CD8-positive, alpha-beta T cell (primary cell): ENCODE measurements at regions of chr2 and their contacts with region 1.

Region 1: GRCh38 chr2:55050133-55050994 is at the start of gene RTN4:
- DNase-seq: peak; percentile 95 to 99 (median 98)
- ATAC-seq: peak; percentile 88
- H3K4me3 ChIP-seq: peak within 1 kb of the TSS; percentile 79 to 87
- H3K4me3 Mint-ChIP-seq: peak within 1 kb of the TSS; percentile 100
- H3K27ac ChIP-seq: peak within 1 kb of the TSS; percentile 83 to 90
- H3K27ac Mint-ChIP-seq: peak within 1 kb of the TSS; percentile 100
- H3K4me1 ChIP-seq: peaks cover 60% of the 10 kb centered on the region
- H3K4me1 Mint-ChIP-seq: peaks cover 72% of the 10 kb centered on the region
- H3K27me3 ChIP-seq: no peaks in the 10 kb centered on the region
- H3K27me3 Mint-ChIP-seq: no peaks in the 10 kb centered on the region
- CTCF ChIP-seq: no peak
- total RNA-seq, gene RTN4: 79.7 to 81.7 TPM

Region 2: GRCh38 chr2:54558188-54559005 is 492.0 kb before region 1 on chr2:
- CTCF ChIA-PET with region 1: no interaction called
- POLR2A ChIA-PET with region 1: no interaction called
- intact Hi-C with region 1: loop called in 1 of 2 experiments (anchors 10 kb)
- DNase-seq: peak; percentile 43 to 85 (median 69)
- ATAC-seq: peak; percentile 67
- H3K4me3 ChIP-seq: peak overlapping the region; percentile 92 to 94
- H3K4me3 Mint-ChIP-seq: peak overlapping the region; percentile 98
- H3K27ac ChIP-seq: peak overlapping the region; percentile 81 to 82
- H3K27ac Mint-ChIP-seq: peak overlapping the region; percentile 93
- H3K4me1 ChIP-seq: peaks cover 35% of the 10 kb centered on the region
- H3K4me1 Mint-ChIP-seq: peaks cover 64% of the 10 kb centered on the region
- H3K27me3 ChIP-seq: no peaks in the 10 kb centered on the region
- H3K27me3 Mint-ChIP-seq: no peaks in the 10 kb centered on the region
- CTCF ChIP-seq: no peak

Region 3: DNA sequence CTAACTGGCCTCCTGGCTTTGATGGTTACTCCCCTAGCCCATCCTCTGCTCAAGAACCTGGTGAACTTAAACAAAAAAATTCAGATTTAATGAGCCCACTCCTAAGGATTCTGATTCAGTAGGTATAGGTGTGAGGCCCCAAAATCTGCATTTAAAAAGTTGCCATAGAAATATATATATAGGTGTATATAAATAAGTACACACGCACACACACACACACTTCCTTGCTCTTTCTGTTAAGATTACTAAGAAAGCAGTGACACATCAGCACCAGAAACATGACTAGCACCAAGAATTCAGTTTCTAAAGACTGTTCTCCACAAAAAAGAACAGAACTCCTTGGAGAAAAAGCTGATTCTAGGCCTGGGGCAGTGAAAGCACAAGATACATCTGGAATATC is 309.1 kb before region 1 on chr2:
- CTCF ChIA-PET with region 1: no interaction called
- POLR2A ChIA-PET with region 1: no interaction called
- intact Hi-C with region 1: no loop called
- DNase-seq: no peak
- ATAC-seq: no peak
- H3K4me3 ChIP-seq: no peak overlapping the region
- H3K4me3 Mint-ChIP-seq: no peak overlapping the region
- H3K27ac ChIP-seq: no peak overlapping the region
- H3K27ac Mint-ChIP-seq: no peak overlapping the region
- H3K4me1 ChIP-seq: no peaks in the 10 kb centered on the region
- H3K4me1 Mint-ChIP-seq: no peaks in the 10 kb centered on the region
- H3K27me3 ChIP-seq: no peaks in the 10 kb centered on the region
- H3K27me3 Mint-ChIP-seq: peaks cover 4% of the 10 kb centered on the region
- CTCF ChIP-seq: no peak

Region 4: DNA sequence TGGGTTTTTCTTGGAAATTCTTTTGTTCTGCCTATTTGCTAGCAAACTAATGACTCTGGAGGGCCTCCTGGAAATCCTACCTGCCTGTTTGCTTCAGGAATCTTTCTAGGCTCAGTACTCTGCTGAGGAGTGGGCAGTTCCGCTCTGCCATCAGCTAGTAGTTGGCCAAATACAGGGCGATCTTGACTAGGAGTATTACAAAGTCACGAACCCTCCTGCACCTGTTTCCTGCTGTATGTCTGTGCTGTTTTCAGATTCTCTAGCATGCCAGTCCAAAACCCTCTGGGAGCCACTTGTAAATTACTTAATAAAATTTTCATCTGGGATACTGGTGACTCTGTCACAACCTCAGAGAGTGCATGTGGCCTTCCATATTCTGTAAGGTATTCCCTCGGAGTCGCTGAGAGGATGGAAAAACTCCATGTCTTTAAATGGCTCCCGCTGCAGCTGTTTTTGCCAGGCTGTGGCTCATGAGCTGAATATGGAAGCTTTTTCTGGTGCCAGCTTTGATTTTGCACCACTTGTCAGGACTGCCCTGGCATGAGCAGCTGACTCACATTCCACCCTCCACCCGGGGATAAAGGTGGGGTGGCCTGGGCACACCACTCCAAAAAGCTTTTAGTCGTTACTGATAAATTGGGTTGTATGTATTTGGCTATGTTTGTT is 123.1 kb before region 1 on chr2:
- CTCF ChIA-PET with region 1: no interaction called
- POLR2A ChIA-PET with region 1: no interaction called
- intact Hi-C with region 1: no loop called
- DNase-seq: no peak
- ATAC-seq: no peak
- H3K4me3 ChIP-seq: no peak overlapping the region
- H3K4me3 Mint-ChIP-seq: no peak overlapping the region
- H3K27ac ChIP-seq: no peak overlapping the region
- H3K27ac Mint-ChIP-seq: no peak overlapping the region
- H3K4me1 ChIP-seq: no peaks in the 10 kb centered on the region
- H3K4me1 Mint-ChIP-seq: no peaks in the 10 kb centered on the region
- H3K27me3 ChIP-seq: no peaks in the 10 kb centered on the region
- H3K27me3 Mint-ChIP-seq: peaks cover 8% of the 10 kb centered on the region
- CTCF ChIP-seq: no peak

Region 5: GRCh38 chr2:55010149-55010591 is 40.2 kb before region 1 on chr2:
- CTCF ChIA-PET with region 1: interaction called, 18 read pairs
- POLR2A ChIA-PET with region 1: interaction called, 15 read pairs
- intact Hi-C with region 1: loop called (anchors 1 to 5 kb)
- DNase-seq: peak; percentile 7 to 79 (median 54)
- ATAC-seq: peak; percentile 95
- H3K4me3 ChIP-seq: peak overlapping the region; percentile 24 to 43
- H3K4me3 Mint-ChIP-seq: peak overlapping the region; percentile 93
- H3K27ac ChIP-seq: peak overlapping the region; percentile 40 to 45
- H3K27ac Mint-ChIP-seq: peak overlapping the region; percentile 95
- H3K4me1 ChIP-seq: peaks cover 61% of the 10 kb centered on the region
- H3K4me1 Mint-ChIP-seq: peaks cover 77% of the 10 kb centered on the region
- H3K27me3 ChIP-seq: no peaks in the 10 kb centered on the region
- H3K27me3 Mint-ChIP-seq: no peaks in the 10 kb centered on the region
- CTCF ChIP-seq: no peak

Region 6: DNA sequence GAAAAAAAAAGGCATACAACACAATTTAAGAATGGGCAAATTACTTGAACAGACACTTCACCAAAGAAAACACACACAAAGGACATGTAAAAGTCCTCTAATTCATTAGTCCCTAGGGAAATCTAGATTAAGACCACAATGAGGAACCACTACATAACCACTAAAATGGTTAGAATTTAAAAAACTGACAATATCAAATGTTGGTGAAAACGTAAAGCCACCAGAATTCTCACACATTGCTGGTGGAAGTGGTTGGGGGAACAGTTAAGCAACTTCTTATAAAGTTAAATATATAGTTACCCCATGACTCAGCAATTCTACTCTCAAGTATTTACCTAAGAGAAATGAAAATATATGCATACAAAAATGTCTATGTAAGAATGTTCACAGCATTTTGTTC is 11.9 kb before region 1 on chr2:
- CTCF ChIA-PET with region 1: interaction called, 11 read pairs
- POLR2A ChIA-PET with region 1: interaction called, 5 read pairs
- intact Hi-C with region 1: loop called in 1 of 2 experiments (anchors 1 kb)
- DNase-seq: peak in 1 of 9 experiments; percentile 13
- ATAC-seq: no peak
- H3K4me3 ChIP-seq: no peak overlapping the region
- H3K4me3 Mint-ChIP-seq: no peak overlapping the region
- H3K27ac ChIP-seq: no peak overlapping the region
- H3K27ac Mint-ChIP-seq: no peak overlapping the region
- H3K4me1 ChIP-seq: peaks cover 19% of the 10 kb centered on the region
- H3K4me1 Mint-ChIP-seq: peaks cover 63% of the 10 kb centered on the region
- H3K27me3 ChIP-seq: no peaks in the 10 kb centered on the region
- H3K27me3 Mint-ChIP-seq: no peaks in the 10 kb centered on the region
- CTCF ChIP-seq: no peak

Region 7: DNA sequence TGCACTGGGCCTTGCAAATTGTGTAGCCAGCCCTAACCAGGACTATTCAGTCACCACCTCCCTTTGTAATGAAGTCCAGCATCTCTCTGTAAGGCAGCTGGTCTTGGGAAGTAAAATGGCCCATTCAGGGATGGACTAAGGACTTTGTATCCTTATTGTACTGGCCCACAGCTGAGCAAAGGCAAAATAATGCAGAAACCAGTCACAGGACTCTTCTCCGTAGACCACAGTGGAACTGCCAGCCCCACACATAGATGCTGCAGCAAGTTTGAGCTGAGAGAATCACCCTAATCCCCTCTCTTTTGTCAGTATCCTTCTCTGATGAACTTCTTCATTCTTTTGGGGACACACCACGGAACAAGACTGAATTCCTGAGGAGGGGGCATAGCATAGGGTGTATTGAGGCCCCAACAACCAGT is 73.5 kb after region 1 on chr2:
- CTCF ChIA-PET with region 1: no interaction called
- POLR2A ChIA-PET with region 1: no interaction called
- intact Hi-C with region 1: no loop called
- DNase-seq: no peak
- ATAC-seq: no peak
- H3K4me3 ChIP-seq: no peak overlapping the region
- H3K4me3 Mint-ChIP-seq: no peak overlapping the region
- H3K27ac ChIP-seq: no peak overlapping the region
- H3K27ac Mint-ChIP-seq: no peak overlapping the region
- H3K4me1 ChIP-seq: no peaks in the 10 kb centered on the region
- H3K4me1 Mint-ChIP-seq: no peaks in the 10 kb centered on the region
- H3K27me3 ChIP-seq: no peaks in the 10 kb centered on the region
- H3K27me3 Mint-ChIP-seq: no peaks in the 10 kb centered on the region
- CTCF ChIP-seq: no peak

Region 8: GRCh38 chr2:55223958-55224760 is 173.8 kb after region 1 on chr2:
- CTCF ChIA-PET with region 1: no interaction called
- POLR2A ChIA-PET with region 1: interaction called, 14 read pairs
- intact Hi-C with region 1: loop called in 1 of 2 experiments (anchors 1 kb)
- DNase-seq: peak in 3 of 9 experiments; percentile 5 to 52 (median 34)
- ATAC-seq: no peak
- H3K4me3 ChIP-seq: peak overlapping the region in 1 of 2 experiments; percentile 53
- H3K4me3 Mint-ChIP-seq: peak overlapping the region; percentile 84
- H3K27ac ChIP-seq: peak overlapping the region; percentile 68 to 72
- H3K27ac Mint-ChIP-seq: peak overlapping the region; percentile 91
- H3K4me1 ChIP-seq: peaks cover 28% of the 10 kb centered on the region
- H3K4me1 Mint-ChIP-seq: peaks cover 42% of the 10 kb centered on the region
- H3K27me3 ChIP-seq: no peaks in the 10 kb centered on the region
- H3K27me3 Mint-ChIP-seq: no peaks in the 10 kb centered on the region
- CTCF ChIP-seq: no peak

Region 9: GRCh38 chr2:55419679-55420438 is 369.5 kb after region 1 on chr2 and contains the start of gene CCDC88A:
- CTCF ChIA-PET with region 1: no interaction called
- POLR2A ChIA-PET with region 1: interaction called, 3 read pairs
- intact Hi-C with region 1: loop called (anchors 1 to 5 kb)
- DNase-seq: peak; percentile 71 to 96 (median 85)
- ATAC-seq: peak; percentile 80
- H3K4me3 ChIP-seq: peak within 1 kb of the TSS; percentile 75 to 93
- H3K4me3 Mint-ChIP-seq: peak within 1 kb of the TSS; percentile 92
- H3K27ac ChIP-seq: peak within 1 kb of the TSS; percentile 57 to 83
- H3K27ac Mint-ChIP-seq: peak within 1 kb of the TSS; percentile 87
- H3K4me1 ChIP-seq: peaks cover 14% of the 10 kb centered on the region
- H3K4me1 Mint-ChIP-seq: peaks cover 38% of the 10 kb centered on the region
- H3K27me3 ChIP-seq: no peaks in the 10 kb centered on the region
- H3K27me3 Mint-ChIP-seq: peaks cover 4% of the 10 kb centered on the region
- CTCF ChIP-seq: no peak
- total RNA-seq, gene CCDC88A: 9.5 to 12.3 TPM

Region 10: GRCh38 chr2:55565613-55566012 is 515.2 kb after region 1 on chr2:
- CTCF ChIA-PET with region 1: no interaction called
- POLR2A ChIA-PET with region 1: no interaction called
- intact Hi-C with region 1: no loop called
- DNase-seq: peak in 2 of 9 experiments; percentile 35 to 68
- ATAC-seq: peak; percentile 83
- H3K4me3 ChIP-seq: no peak overlapping the region
- H3K4me3 Mint-ChIP-seq: peak overlapping the region; percentile 9
- H3K27ac ChIP-seq: peak overlapping the region in 1 of 2 experiments; percentile 24
- H3K27ac Mint-ChIP-seq: peak overlapping the region; percentile 88
- H3K4me1 ChIP-seq: peaks cover 16% of the 10 kb centered on the region
- H3K4me1 Mint-ChIP-seq: peaks cover 27% of the 10 kb centered on the region
- H3K27me3 ChIP-seq: no peaks in the 10 kb centered on the region
- H3K27me3 Mint-ChIP-seq: no peaks in the 10 kb centered on the region
- CTCF ChIP-seq: no peak

Region 11: DNA sequence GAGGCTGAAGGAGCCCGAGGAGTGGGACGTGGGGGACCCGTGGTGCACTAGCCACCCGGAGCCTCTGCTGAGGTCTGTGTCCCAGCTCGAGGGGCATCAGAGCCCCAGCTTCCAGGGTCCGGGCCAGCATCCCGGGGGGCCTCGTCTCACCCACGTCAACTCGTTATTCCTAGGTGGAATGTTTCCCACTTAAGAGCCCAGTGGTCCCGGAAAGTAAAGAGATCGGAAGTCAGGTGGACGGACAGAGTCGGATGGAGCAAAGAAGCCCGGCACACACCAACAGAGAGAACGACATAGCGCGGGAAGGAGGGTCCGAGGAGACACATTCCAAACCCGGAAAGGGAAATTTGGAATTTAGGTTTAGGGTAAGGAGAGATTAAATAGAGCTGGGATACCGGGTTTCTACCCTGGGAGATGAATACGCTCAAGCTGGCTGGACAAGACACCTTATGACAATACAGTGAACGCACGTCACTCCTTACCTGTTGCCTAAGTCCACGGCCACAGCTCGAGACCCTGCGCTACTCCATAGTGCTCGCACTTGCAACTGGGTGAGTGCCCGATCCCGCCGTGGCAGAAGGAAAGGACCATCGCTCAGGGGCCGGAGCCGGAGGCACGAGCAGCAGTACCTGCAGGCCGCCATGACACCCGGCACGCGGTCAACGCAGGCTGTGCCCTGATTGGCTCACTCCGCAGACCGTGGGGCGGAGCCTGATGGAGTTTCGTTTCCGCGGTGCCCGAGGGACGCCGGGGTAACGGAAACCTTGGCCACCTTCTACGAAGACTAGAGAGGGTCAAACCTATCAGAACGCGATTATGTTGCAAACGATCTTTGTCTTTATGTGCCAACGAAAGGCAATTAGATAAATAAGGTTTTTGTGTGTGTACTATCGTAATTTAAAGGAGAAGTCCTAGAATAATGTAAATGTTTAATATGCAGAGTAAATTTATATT is 643.1 kb after region 1 on chr2 and contains the start of gene PNPT1:
- CTCF ChIA-PET with region 1: no interaction called
- POLR2A ChIA-PET with region 1: no interaction called
- intact Hi-C with region 1: loop called in 1 of 2 experiments (anchors 2 kb)
- DNase-seq: peak; percentile 84 to 95 (median 92)
- ATAC-seq: peak; percentile 100
- H3K4me3 ChIP-seq: peak within 1 kb of the TSS; percentile 90 to 98
- H3K4me3 Mint-ChIP-seq: peak within 1 kb of the TSS; percentile 98
- H3K27ac ChIP-seq: peak within 1 kb of the TSS; percentile 59 to 66
- H3K27ac Mint-ChIP-seq: peak within 1 kb of the TSS; percentile 93
- H3K4me1 ChIP-seq: peaks cover 12% of the 10 kb centered on the region
- H3K4me1 Mint-ChIP-seq: peaks cover 40% of the 10 kb centered on the region
- H3K27me3 ChIP-seq: no peaks in the 10 kb centered on the region
- H3K27me3 Mint-ChIP-seq: no peaks in the 10 kb centered on the region
- CTCF ChIP-seq: no peak
- total RNA-seq, gene PNPT1: 12.8 to 13.9 TPM